ENCODE measurements at regions of chr19 and their contacts with region 1.

Region 1: DNA sequence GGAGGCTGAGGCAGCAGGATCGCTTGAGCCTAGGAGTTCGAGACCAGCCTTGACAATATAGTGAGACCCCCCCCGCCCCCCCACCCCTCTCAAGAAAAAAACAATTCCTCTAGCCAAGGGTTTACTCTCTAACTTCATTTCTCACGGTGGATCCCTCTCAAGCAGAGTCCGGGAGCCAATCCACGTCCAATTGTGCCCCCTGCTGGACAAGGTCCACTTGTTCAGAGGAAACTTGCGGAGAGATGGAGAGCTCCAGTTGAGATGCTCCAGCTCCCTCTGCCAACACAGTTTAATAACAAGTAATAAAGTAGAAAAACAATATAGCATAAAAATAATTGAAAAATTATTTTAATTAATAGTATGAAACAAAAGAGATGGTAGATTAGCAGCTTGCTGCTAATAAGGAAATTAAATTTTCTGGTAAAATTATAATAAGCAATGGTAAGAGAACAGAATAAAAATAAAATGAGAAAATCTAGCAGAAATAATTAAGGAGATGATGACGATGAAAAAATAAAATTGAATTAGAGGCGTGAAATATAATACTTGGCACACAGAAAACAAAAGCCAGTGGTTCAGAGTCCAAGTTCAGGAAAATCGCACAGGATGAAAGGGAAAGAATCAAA is 14.5 kb upstream of the SIGLEC14 start:
- DNase-seq: peak; percentile 55
- ATAC-seq: peak; percentile 86
- H3K4me3 ChIP-seq: no peak overlapping the region
- H3K27ac ChIP-seq: no peak overlapping the region
- H3K4me1 ChIP-seq: peaks cover 0 to 5% of the 10 kb centered on the region in 2 experiments; a peak in 2 of 4 replicates
- H3K27me3 ChIP-seq: peaks cover 12% of the 10 kb centered on the region; the same call in 1 of the 2 replicates
- CTCF ChIP-seq: peak; percentile 59 to 77 (median 66)
- POLR2A ChIP-seq: no peak
- RAD21 ChIP-seq: peak; percentile 72

Region 2: DNA sequence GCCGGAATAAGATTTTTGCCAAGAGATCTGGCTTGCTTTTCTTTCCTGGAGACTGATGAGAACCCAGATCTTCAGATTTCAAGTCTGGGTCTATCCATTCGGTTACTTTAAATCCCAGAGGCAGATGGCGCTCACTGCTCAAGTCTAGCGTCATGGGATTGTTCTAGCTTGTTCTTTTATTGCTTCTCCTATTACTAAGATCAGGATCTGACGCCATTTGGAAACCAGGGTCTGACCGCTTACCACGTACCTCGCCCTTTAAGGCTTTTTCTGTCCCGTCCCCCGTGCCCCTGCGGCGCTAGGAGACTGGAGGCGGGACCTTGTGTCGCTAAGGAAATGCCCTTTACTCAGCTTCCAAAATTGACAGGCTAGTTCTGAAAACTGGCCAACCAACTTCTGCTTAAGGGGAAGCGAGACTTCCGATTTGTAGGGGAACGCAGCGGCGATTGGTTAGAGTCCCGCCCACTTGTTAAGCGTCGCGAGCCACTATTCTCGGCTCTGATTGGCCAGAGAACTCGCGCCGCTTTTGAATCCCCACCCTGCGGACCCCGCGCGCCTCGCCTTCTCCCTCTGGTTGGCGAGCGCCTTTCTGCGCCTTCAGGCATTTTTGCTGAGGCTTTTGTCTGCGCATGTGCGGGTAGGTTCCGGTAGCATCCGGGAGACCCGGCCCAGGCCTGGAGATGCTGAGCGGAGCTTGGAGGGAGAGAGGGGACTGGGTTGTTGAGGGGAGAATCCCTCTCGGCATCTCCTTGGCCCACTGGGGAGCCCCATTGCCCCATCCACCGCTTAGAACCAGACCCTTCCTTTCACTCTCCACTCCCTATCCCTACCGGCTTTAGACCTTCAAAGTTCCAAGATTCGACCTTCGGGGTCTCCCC is 266.9 kb before region 1 on chr19:
- CTCF ChIA-PET with region 1: interaction called, 11 read pairs
- POLR2A ChIA-PET with region 1: no interaction called
- RAD21 ChIA-PET with region 1: interaction called, 3 to 5 read pairs
- intact Hi-C with region 1: no loop called
- DNase-seq: peak; percentile 100
- ATAC-seq: peak; percentile 90
- H3K4me3 ChIP-seq: peak overlapping the region; percentile 65 to 95
- H3K27ac ChIP-seq: peak overlapping the region; percentile 81
- H3K4me1 ChIP-seq: peaks cover 6 to 25% of the 10 kb centered on the region in 2 experiments; a peak in 3 of 4 replicates
- H3K27me3 ChIP-seq: no peaks in the 10 kb centered on the region
- CTCF ChIP-seq: no peak
- POLR2A ChIP-seq: peak; percentile 59
- RAD21 ChIP-seq: no peak

Region 3: GRCh38 chr19:51441410-51442390 is 219.4 kb before region 1 on chr19:
- CTCF ChIA-PET with region 1: interaction called, 10 read pairs
- POLR2A ChIA-PET with region 1: no interaction called
- RAD21 ChIA-PET with region 1: no interaction called
- intact Hi-C with region 1: no loop called
- DNase-seq: no peak
- ATAC-seq: peak; percentile 74
- H3K4me3 ChIP-seq: peak overlapping the region; percentile 1 to 41; a peak in 3 of 4 replicates
- H3K27ac ChIP-seq: no peak overlapping the region
- H3K4me1 ChIP-seq: peaks cover 13 to 18% of the 10 kb centered on the region in 2 experiments
- H3K27me3 ChIP-seq: peaks cover 15% of the 10 kb centered on the region
- CTCF ChIP-seq: no peak
- POLR2A ChIP-seq: no peak
- RAD21 ChIP-seq: no peak

Region 4: DNA sequence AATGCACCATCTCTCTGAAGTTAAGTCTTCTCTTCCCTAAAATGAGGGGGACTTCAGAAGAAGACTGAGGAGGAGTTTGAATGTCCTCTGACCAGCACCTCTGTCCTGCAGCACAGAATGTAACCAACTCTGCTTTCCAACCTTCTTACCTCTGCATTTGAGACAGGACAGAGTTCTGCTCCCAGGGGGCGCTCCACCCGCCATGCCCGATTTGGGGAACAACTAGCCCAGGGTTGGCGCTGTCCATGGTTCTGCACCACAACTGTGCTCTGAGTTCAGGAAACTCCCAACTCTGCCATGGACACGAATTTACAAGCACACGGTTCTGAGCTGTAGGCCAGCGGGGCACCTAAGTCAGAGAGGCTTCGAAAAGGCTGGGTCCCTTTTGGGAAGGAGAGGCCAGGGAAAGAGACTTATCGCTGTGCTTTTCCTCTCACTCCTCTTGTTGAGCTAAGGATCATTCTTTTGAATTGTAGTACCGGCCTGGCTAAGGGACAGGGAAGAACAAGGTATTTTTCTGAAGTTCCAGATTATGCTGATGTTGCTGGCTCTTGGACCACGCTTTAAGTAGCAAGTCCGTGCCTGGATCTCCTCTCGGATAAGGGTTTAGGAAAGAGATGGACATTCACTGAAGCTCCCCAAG is 53.0 kb before region 1 on chr19:
- CTCF ChIA-PET with region 1: interaction called, 26 read pairs
- POLR2A ChIA-PET with region 1: no interaction called
- RAD21 ChIA-PET with region 1: interaction called in 1 of 2 experiments, 4 read pairs
- intact Hi-C with region 1: loop called (anchors 5 kb)
- DNase-seq: peak; percentile 64
- ATAC-seq: peak; percentile 97
- H3K4me3 ChIP-seq: no peak overlapping the region
- H3K27ac ChIP-seq: no peak overlapping the region
- H3K4me1 ChIP-seq: no peaks in the 10 kb centered on the region
- H3K27me3 ChIP-seq: peaks cover 45% of the 10 kb centered on the region
- CTCF ChIP-seq: peak; percentile 72 to 93 (median 91); a peak in 5 of 6 replicates
- POLR2A ChIP-seq: no peak
- RAD21 ChIP-seq: peak; percentile 52

Region 5: GRCh38 chr19:51644636-51645271 is 16.3 kb before region 1 on chr19:
- CTCF ChIA-PET with region 1: interaction called, 21 read pairs
- POLR2A ChIA-PET with region 1: no interaction called
- RAD21 ChIA-PET with region 1: no interaction called
- intact Hi-C with region 1: no loop called
- DNase-seq: no peak
- ATAC-seq: no peak
- H3K4me3 ChIP-seq: no peak overlapping the region
- H3K27ac ChIP-seq: no peak overlapping the region
- H3K4me1 ChIP-seq: no peaks in the 10 kb centered on the region
- H3K27me3 ChIP-seq: peaks cover 65% of the 10 kb centered on the region
- CTCF ChIP-seq: no peak
- POLR2A ChIP-seq: no peak
- RAD21 ChIP-seq: no peak

Region 6: GRCh38 chr19:51688672-51689571 is 27.8 kb after region 1 on chr19:
- CTCF ChIA-PET with region 1: interaction called, 13 read pairs
- POLR2A ChIA-PET with region 1: no interaction called
- RAD21 ChIA-PET with region 1: interaction called in 1 of 2 experiments, 4 read pairs
- intact Hi-C with region 1: no loop called
- DNase-seq: peak; percentile 73
- ATAC-seq: peak; percentile 84
- H3K4me3 ChIP-seq: peak overlapping the region; percentile 78 to 79
- H3K27ac ChIP-seq: peak overlapping the region; percentile 78
- H3K4me1 ChIP-seq: peaks cover 23 to 48% of the 10 kb centered on the region in 2 experiments
- H3K27me3 ChIP-seq: no peaks in the 10 kb centered on the region
- CTCF ChIP-seq: no peak
- POLR2A ChIP-seq: peak; percentile 25
- RAD21 ChIP-seq: no peak

Region 7: GRCh38 chr19:51742789-51743188 is 81.7 kb after region 1 on chr19:
- CTCF ChIA-PET with region 1: no interaction called
- POLR2A ChIA-PET with region 1: no interaction called
- RAD21 ChIA-PET with region 1: no interaction called
- intact Hi-C with region 1: no loop called
- DNase-seq: no peak
- ATAC-seq: no peak
- H3K4me3 ChIP-seq: no peak overlapping the region
- H3K27ac ChIP-seq: no peak overlapping the region
- H3K4me1 ChIP-seq: no peaks in the 10 kb centered on the region
- H3K27me3 ChIP-seq: no peaks in the 10 kb centered on the region
- CTCF ChIP-seq: no peak
- POLR2A ChIP-seq: no peak
- RAD21 ChIP-seq: no peak

Measured in HCT116 (cell line).